KBM-7 (cell line): ENCODE measurements at regions of chr1 and their contacts with region 1.

Region 1: DNA sequence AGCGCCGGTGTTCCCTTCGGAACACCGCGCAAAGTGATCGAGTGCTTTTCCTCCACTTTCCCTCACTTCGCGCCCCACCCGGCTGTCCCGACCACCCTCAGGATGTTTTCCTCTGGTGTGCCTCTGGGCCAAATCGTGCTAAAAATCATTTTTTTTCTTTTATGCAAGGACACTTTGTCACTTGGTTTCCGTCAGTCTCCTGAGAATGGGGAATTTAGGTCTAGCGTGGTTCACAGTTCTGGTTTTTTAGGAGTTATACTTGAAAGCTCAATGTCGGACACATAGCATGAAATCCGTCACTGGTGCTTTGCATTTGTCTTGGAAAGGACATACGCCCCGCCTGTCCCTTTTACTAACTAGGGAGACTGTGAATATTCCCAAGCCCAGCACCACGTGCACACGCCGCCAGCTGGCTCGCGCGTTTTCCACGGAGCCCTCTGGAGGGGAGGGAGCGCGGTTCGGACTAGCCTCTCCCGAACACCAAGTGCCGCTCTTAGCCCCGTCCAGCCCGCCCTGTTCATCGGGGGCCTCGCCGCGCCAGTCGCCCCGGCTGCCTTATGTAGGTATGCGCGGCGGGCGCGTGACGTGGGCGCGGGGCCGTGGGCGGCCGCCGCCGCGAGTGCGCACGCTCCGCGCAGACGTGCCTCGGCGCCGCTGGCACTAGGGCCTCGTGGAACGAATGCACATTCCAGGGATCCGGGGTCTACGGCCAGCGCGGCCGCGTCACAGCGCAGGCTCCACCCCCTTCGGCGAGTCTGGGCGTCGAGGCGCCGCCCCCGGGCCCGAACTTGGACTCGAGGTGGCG is 572 bp upstream of the IRF2BP2 start:
- DNase-seq: peak; percentile 92

Region 2: DNA sequence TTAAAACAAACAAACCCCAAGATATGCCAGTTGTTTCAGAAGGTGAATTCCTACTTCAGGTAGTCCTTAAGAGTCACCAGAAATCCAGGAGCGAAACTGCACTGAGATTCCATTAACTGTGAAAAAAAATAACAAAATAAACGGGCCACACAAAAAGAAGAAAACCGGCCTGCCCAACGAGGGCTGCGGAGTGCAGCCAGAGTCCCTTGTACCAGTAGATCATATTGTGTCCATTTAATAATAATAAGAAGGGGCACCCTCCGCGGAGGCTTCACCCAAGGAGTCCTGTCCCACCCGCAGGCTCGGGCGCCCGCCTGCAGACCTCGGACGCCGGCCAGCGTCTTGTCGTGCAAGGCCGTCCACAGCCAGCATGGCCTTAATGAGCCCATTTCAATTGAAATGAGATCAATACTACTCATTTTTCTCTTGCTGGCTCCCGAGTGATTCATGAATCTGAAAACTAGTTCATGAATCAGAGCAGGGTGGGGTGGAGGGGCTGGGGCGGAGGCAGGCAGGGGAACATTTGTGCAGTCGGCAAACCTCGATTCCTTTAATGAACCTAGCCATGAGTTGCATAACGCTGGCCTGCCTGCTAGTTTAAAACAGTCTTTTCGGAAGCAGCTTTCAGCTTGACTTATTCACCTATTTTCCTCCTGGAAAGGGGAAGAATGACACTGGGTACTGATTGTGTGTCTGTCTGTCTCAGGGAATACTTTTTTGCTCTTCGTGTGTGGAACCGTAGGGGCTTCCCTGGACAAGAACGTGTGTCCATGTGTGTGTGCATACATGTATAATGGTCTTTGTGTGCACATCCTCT is 112.6 kb after region 1 on chr1:
- in situ Hi-C with region 1: loop called (anchors 10 kb)
- DNase-seq: no peak

Region 3: DNA sequence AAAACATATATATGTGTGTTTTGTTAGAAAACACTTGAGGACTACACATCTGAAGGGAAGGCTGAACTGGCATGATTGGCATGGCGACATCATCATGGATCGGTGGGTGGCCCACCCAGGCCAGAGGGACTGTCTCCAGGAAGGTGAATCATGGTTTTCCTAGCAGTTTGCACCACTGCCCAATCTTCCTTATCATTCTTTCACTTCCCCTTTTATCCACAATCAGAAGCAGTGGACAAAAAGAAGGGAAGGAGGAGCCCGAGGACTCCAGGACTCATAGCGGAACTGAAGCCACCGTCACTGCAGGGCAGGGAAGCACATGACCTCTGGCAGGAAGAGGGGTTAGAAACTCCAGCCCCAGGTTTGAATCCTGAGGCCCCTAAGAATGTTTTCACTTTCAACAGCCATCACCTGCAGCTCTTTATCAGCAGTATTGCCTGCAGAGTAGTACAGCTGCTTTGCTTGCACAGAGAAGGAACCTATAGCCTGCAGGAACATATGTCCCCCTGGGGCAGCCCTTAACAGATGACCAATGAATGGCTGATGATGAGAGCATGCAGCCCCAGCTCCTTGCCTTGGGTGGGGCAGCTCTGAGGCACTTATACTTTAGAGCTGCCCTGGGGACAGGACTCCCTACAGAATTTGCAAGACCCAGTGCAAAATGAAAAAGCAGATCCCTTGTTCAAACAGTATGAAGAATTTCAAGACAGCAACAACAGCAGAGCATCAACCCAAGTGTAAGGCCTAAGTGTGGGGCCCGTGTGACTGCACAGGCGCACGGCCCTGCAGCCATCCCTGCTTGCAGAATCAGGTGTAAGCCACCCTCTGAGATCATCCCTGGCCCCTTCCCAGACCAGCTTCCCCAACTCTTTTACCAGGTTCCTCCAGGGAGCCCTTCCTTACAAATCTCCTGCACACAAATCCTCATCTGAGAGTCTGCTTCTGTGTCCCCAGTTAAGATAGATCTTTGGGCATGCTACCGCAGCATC is 241.2 kb after region 1 on chr1:
- in situ Hi-C with region 1: loop called (anchors 25 kb)
- DNase-seq: peak; percentile 86

Region 4: DNA sequence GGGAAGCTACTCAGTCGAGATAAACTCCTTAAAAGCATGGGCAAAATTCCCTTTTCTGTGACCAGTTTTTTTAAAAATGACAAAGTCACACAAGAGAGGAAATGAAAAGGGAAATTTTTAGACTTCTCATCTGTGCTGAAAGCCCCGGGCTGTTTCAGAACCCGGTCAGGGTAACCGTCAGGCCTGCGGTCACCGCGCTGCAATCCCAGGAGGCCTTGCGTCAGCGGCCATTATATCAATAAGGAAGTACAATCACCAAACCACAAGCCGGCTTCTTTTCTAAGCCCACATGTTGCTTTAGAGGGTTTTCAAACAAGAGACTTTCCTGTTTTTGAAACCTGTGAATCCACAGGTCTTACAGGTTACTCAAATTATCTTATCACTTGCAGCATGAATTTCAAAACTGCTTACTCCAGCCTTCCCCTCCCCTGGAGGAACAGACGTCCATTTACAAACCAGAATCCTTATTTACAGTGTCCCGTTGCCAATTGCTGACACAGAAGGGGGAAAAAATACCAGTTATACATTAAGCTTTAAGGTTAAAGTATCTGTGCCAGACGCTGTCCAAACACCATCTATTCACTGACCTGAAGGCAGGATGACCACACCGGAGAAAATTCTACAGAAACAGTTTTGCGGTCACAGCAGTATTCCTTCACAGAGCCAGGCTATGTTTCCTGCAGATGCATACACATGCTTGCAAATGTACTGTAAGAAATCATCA is 352.8 kb after region 1 on chr1:
- in situ Hi-C with region 1: loop called (anchors 25 kb)
- DNase-seq: peak; percentile 97